Activated CD8-positive, alpha-beta T cell treated with anti-CD3 and anti-CD28 coated beads, Interleukin-2, amount 10 ng/mL, durations not matched to agents 7 days and 5 days (primary cell): ENCODE measurements at regions of chr3 and their contacts with region 1.

Region 1: GRCh38 chr3:44529927-44530326 is 25.1 kb upstream of the ZKSCAN7 start:
- DNase-seq: peak; percentile 46
- ATAC-seq: no peak
- H3K4me3 Mint-ChIP-seq: no peak overlapping the region
- H3K27ac Mint-ChIP-seq: no peak overlapping the region
- H3K4me1 Mint-ChIP-seq: no peaks in the 10 kb centered on the region
- H3K27me3 Mint-ChIP-seq: peaks cover 20% of the 10 kb centered on the region

Region 2: DNA sequence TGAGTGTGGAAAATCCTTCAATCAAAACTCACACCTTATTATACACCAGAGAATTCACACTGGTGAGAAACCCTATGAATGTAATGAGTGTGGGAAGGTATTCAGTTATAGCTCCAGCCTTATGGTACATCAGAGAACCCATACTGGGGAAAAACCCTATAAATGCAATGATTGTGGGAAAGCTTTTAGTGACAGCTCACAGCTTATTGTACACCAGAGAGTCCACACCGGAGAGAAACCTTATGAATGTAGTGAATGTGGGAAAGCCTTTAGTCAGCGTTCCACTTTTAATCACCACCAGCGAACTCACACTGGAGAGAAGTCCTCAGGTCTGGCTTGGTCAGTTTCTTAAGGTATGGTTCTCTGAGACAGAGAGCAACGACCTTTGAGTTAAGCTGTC is 41.1 kb after region 1 on chr3:
- CTCF ChIA-PET with region 1: no interaction called
- POLR2A ChIA-PET with region 1: no interaction called
- DNase-seq: no peak
- ATAC-seq: no peak
- H3K4me3 Mint-ChIP-seq: no peak overlapping the region
- H3K27ac Mint-ChIP-seq: no peak overlapping the region
- H3K4me1 Mint-ChIP-seq: no peaks in the 10 kb centered on the region
- H3K27me3 Mint-ChIP-seq: no peaks in the 10 kb centered on the region

Region 3: DNA sequence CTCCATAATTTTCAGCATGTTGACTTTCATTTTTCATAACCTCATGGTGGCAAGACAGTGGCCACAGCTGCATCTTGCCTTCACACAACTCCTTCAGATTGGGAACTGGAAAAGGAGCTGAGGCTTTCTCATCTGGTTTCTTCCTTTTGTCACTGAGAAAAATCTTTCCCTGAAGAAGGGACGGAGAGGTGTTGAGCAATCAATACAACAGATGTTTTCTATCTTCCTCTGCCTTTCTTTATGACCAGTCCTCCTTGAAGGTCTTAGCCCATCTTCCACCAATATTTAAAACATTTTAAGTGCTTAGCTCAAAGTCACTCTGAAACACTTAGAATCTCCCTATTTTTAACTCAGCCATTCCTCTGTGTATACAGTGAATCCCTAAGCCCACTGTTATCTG is 66.7 kb after region 1 on chr3:
- CTCF ChIA-PET with region 1: no interaction called
- POLR2A ChIA-PET with region 1: no interaction called
- DNase-seq: no peak
- ATAC-seq: no peak
- H3K4me3 Mint-ChIP-seq: no peak overlapping the region
- H3K27ac Mint-ChIP-seq: no peak overlapping the region
- H3K4me1 Mint-ChIP-seq: no peaks in the 10 kb centered on the region
- H3K27me3 Mint-ChIP-seq: no peaks in the 10 kb centered on the region

Region 4: DNA sequence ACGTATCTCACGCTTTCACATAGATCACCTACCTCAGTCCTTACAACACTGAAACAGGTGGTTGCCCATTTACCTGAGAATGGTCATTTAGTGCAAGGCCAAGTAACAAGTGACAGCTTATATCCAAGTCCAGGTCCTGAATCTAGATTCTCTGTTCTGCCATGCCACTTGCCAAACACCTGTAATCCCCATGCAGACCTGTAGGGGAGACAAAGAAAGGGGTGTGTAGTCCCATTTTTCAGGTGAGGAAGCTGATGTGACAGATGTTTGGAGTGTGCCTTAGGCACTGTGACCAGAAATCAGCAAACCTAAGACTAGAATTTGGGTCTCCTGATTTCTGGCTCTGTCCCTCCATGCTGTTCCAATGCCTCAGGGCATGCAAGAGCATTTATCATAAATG is 131.3 kb after region 1 on chr3:
- CTCF ChIA-PET with region 1: no interaction called
- POLR2A ChIA-PET with region 1: no interaction called
- DNase-seq: no peak
- ATAC-seq: no peak
- H3K4me3 Mint-ChIP-seq: no peak overlapping the region
- H3K27ac Mint-ChIP-seq: no peak overlapping the region
- H3K4me1 Mint-ChIP-seq: no peaks in the 10 kb centered on the region
- H3K27me3 Mint-ChIP-seq: no peaks in the 10 kb centered on the region

Region 5: GRCh38 chr3:44913868-44914468 is 384.0 kb after region 1 on chr3:
- CTCF ChIA-PET with region 1: interaction called, 18 read pairs
- POLR2A ChIA-PET with region 1: no interaction called
- DNase-seq: peak; percentile 72
- ATAC-seq: peak; percentile 88
- H3K4me3 Mint-ChIP-seq: no peak overlapping the region
- H3K27ac Mint-ChIP-seq: no peak overlapping the region
- H3K4me1 Mint-ChIP-seq: no peaks in the 10 kb centered on the region
- H3K27me3 Mint-ChIP-seq: peaks cover 10% of the 10 kb centered on the region